Prostate gland (tissue), 2 donors: ENCODE measurements at regions of chr2 and their contacts with region 1.

Region 1: DNA sequence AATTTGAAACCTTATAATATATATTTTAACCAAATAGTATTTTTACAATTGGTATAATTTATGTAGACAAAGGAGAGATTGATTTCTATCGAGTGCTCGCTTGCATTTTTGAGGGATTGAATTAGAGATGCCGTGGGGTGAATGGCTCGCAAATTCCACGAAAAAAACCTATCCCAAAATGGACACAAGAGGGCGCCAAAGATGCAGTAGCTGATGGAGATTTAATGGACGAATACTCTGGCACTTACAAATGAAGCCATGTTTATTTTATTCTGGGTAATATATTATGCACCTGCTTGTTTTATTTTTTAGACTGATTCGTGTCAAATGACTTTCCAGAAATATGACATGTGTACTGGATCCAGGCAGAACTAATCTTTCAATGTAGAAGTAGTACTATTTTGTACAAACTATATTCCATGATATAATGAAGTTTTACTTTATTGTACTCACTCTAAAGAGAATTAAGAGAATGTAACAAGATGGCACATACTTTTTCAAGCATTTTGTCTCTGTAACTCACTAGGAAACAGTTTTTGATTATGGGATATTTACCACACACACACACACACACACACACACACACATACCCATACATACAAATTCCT is 505.4 kb downstream of the PLCL1 start:
- DNase-seq: no peak
- H3K4me3 ChIP-seq: no peak overlapping the region
- H3K27ac ChIP-seq: no peak overlapping the region
- H3K4me1 ChIP-seq: no peaks in the 10 kb centered on the region
- H3K27me3 ChIP-seq: no peaks in the 10 kb centered on the region
- CTCF ChIP-seq: peak; percentile 55 to 68 (median 59)
- POLR2A ChIP-seq: no peak

Region 2: GRCh38 chr2:198546122-198546521 is 236.3 kb after region 1 on chr2:
- intact Hi-C with region 1: no loop called
- DNase-seq: no peak
- H3K4me3 ChIP-seq: no peak overlapping the region
- H3K27ac ChIP-seq: no peak overlapping the region
- H3K4me1 ChIP-seq: no peaks in the 10 kb centered on the region
- H3K27me3 ChIP-seq: no peaks in the 10 kb centered on the region
- CTCF ChIP-seq: no peak
- POLR2A ChIP-seq: no peak

Region 3: GRCh38 chr2:199459286-199460016 is 1149.7 kb after region 1 on chr2:
- intact Hi-C with region 1: loop called (anchors 10 kb)
- DNase-seq: peak; percentile 89
- H3K4me3 ChIP-seq: peak overlapping the region; percentile 70 to 82
- H3K27ac ChIP-seq: peak overlapping the region; percentile 80 to 84
- H3K4me1 ChIP-seq: no peaks in the 10 kb centered on the region
- H3K27me3 ChIP-seq: no peaks in the 10 kb centered on the region
- CTCF ChIP-seq: peak in 2 of 4 experiments; percentile 2 to 11
- POLR2A ChIP-seq: no peak